Activated CD8-positive, alpha-beta T cell treated with anti-CD3 and anti-CD28 coated beads, Interleukin-2, amount 10 ng/mL, durations not matched to agents 7 days and 5 days (primary cell): ENCODE measurements at regions of chr14 and their contacts with region 1.

Region 1: GRCh38 chr14:64891839-64892375 is 12.2 kb upstream of the SPTB start:
- DNase-seq: peak; percentile 66
- ATAC-seq: peak; percentile 81
- H3K4me3 Mint-ChIP-seq: no peak overlapping the region
- H3K27ac Mint-ChIP-seq: no peak overlapping the region
- H3K4me1 Mint-ChIP-seq: no peaks in the 10 kb centered on the region
- H3K27me3 Mint-ChIP-seq: peaks cover 20% of the 10 kb centered on the region

Region 2: DNA sequence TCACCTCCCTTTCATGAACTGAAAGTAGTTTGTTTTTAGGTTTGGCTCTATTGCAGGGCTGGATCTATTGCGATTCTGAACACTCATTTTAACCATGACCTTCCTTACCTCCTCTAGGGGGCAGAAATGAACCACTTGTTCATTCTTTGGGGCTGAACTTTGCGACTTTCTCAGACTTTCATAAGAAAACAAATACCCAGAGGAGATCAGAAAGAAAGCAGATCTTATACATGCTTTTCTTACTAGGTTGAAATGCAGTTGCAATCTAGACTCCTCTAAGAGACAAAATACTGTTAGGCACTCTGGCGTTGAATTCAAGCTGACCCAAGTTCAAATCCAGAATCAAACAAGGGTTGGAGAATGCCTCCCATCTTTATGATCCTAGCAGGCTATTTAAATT is 220.3 kb before region 1 on chr14:
- CTCF ChIA-PET with region 1: interaction called, 44 read pairs
- POLR2A ChIA-PET with region 1: no interaction called
- DNase-seq: peak; percentile 44
- ATAC-seq: peak; percentile 67
- H3K4me3 Mint-ChIP-seq: no peak overlapping the region
- H3K27ac Mint-ChIP-seq: no peak overlapping the region
- H3K4me1 Mint-ChIP-seq: peaks cover 38% of the 10 kb centered on the region
- H3K27me3 Mint-ChIP-seq: peaks cover 25% of the 10 kb centered on the region

Region 3: DNA sequence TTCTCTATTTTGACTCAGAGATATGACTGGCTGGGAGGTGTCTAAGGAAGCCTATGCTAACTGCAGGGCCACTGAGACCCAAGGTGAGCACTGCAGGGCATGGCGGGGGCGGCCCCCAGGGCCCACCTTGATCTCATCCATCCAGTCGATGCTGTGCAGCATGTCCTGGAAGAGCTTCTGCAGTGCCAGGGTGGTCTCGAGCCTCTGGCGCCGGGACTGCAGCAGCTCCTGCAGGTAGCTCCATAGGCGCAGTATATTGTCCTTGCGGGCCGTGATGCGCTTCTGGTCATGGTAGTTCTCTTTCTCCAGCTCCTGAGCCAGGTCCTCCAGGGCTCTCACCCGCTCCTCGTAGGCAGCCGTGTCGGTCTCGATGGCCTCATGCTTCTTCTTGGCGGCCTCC is 96.7 kb before region 1 on chr14:
- CTCF ChIA-PET with region 1: interaction called, 11 read pairs
- POLR2A ChIA-PET with region 1: interaction called, 3 read pairs
- DNase-seq: no peak
- ATAC-seq: no peak
- H3K4me3 Mint-ChIP-seq: no peak overlapping the region
- H3K27ac Mint-ChIP-seq: no peak overlapping the region
- H3K4me1 Mint-ChIP-seq: no peaks in the 10 kb centered on the region
- H3K27me3 Mint-ChIP-seq: peaks cover 7% of the 10 kb centered on the region

Region 4: GRCh38 chr14:64823305-64823861 is 68.5 kb before region 1 on chr14:
- CTCF ChIA-PET with region 1: interaction called, 89 read pairs
- POLR2A ChIA-PET with region 1: no interaction called
- DNase-seq: peak; percentile 73
- ATAC-seq: peak; percentile 95
- H3K4me3 Mint-ChIP-seq: no peak overlapping the region
- H3K27ac Mint-ChIP-seq: no peak overlapping the region
- H3K4me1 Mint-ChIP-seq: peaks cover 4% of the 10 kb centered on the region
- H3K27me3 Mint-ChIP-seq: peaks cover 43% of the 10 kb centered on the region

Region 5: DNA sequence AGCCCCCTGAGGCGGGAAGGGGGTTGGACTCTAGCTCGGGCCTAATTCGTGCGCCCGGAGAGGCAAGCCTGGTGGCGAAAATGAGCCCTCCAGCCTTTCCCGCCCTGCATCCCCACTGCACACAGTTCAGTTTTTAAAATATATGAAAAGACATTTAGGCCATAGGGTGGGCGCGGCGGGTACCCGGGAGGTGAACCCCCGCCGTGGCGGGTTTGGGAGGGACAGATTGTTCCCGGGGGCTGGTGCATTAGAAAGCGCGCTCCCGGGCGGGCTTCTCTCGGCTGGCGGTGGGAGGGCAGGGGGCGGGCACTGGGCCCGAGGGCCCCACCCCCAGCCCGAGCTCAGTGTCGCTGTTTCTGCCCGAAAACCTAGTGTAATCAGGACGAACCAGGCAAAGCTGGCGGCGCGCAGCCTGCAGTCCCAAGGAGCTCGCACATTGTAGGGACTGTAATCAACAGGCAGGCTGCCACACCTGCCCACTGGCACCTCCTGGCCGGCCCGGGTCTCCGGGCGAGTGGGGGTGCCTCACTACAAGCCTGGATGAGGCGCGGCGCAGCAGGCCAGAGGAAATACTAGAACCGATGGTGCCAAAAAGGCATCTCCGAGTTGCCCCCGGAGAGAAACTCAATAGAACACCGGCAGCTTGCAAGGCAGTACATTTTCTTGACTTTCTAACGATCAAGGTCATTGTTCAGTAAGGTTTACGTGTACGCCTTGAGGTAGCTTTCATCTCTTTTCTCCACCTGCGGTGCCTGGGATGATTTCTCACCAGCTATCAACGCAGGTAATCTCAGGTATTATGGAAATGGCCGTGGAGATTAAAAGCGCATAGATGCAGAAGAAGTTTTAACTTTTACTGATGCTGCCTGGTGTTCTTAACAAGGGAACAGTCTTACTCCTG is 11.4 kb before region 1 on chr14:
- CTCF ChIA-PET with region 1: interaction called, 57 read pairs
- POLR2A ChIA-PET with region 1: interaction called, 4 read pairs
- DNase-seq: peak; percentile 68
- ATAC-seq: peak; percentile 91
- H3K4me3 Mint-ChIP-seq: peak overlapping the region; percentile 75
- H3K27ac Mint-ChIP-seq: no peak overlapping the region
- H3K4me1 Mint-ChIP-seq: peaks cover 11% of the 10 kb centered on the region
- H3K27me3 Mint-ChIP-seq: peaks cover 61% of the 10 kb centered on the region

Region 6: GRCh38 chr14:64923015-64923414 is 31.1 kb after region 1 on chr14:
- CTCF ChIA-PET with region 1: interaction called, 12 read pairs
- POLR2A ChIA-PET with region 1: no interaction called
- DNase-seq: no peak
- ATAC-seq: no peak
- H3K4me3 Mint-ChIP-seq: no peak overlapping the region
- H3K27ac Mint-ChIP-seq: no peak overlapping the region
- H3K4me1 Mint-ChIP-seq: peaks cover 27% of the 10 kb centered on the region
- H3K27me3 Mint-ChIP-seq: no peaks in the 10 kb centered on the region